AG04449 (cell line): ENCODE measurements at regions of chr6 and their contacts with region 1.

Region 1: DNA sequence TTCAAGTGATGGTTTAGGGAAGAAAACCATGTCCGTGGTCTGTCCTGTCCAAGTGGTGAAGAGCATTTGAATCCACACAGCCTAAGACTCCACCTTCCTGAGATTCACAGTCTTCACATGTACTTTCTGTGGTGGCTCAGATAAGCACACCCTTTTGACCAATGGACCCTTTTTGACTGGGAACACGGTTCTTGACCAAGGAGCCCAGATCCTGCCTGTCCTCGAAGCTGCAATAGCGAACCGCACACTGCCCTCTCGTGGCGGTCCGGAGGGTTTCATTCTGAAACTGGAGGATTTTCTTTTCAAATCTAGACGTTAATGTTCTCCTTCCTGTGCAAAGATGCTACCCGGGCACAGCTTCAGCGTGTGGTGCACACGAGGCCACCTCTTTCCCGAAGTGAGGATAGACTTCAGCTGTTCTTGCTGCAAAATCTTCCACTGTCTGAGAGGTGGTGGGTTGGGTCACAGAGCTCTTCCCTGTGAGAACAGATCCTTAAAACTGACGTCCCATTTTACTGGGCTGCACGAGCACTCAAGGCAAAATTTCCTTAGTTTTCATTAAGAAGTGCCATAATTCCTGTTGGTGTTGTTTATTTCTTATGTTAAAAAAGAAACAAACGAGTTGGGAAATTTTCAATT is 90.5 kb downstream of the SYNJ2 start:
- DNase-seq: no peak
- H3K4me3 ChIP-seq: no peak overlapping the region
- CTCF ChIP-seq: peak; percentile 75

Region 2: GRCh38 chr6:157688960-157689599 is 383.1 kb before region 1 on chr6:
- CTCF ChIA-PET with region 1: no interaction called
- POLR2A ChIA-PET with region 1: no interaction called
- DNase-seq: no peak
- H3K4me3 ChIP-seq: no peak overlapping the region
- CTCF ChIP-seq: peak; percentile 6

Region 3: DNA sequence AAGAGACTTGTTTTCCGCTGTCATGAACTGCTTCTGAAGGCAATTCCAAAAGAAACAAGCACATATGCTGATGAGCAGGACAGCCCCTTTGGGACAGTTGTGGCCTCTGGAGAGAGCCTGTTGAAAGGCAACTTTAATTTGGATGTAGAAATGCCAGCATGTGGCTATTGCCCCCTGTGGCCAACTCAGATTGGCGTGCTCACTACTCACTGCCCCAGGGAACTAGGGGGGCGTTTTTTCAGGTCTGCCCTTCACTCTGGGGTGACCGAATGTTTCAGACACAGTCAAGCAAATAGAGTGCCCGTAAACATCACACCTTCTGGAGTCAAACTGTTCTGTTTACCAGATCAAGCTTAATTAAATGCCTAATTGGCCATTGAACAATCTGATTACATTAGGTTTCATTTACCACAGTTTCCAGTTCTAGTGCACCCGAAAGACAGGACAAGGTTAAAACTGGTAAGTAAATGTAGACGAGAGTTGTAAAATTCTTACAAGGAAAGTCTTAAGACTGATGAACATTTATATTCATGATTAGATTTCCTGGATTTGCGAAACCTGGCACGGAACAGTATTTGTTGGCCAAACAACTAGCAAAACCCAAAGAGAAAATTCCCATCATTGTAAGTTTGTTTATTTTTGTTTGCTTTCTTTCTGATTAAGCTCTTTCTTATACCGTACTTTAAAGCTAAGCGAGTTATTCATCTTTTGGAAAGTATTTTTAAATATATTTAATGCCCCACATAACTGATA is 166.4 kb before region 1 on chr6:
- CTCF ChIA-PET with region 1: interaction called, 10 read pairs
- POLR2A ChIA-PET with region 1: no interaction called
- DNase-seq: no peak
- H3K4me3 ChIP-seq: no peak overlapping the region
- CTCF ChIP-seq: no peak

Region 4: DNA sequence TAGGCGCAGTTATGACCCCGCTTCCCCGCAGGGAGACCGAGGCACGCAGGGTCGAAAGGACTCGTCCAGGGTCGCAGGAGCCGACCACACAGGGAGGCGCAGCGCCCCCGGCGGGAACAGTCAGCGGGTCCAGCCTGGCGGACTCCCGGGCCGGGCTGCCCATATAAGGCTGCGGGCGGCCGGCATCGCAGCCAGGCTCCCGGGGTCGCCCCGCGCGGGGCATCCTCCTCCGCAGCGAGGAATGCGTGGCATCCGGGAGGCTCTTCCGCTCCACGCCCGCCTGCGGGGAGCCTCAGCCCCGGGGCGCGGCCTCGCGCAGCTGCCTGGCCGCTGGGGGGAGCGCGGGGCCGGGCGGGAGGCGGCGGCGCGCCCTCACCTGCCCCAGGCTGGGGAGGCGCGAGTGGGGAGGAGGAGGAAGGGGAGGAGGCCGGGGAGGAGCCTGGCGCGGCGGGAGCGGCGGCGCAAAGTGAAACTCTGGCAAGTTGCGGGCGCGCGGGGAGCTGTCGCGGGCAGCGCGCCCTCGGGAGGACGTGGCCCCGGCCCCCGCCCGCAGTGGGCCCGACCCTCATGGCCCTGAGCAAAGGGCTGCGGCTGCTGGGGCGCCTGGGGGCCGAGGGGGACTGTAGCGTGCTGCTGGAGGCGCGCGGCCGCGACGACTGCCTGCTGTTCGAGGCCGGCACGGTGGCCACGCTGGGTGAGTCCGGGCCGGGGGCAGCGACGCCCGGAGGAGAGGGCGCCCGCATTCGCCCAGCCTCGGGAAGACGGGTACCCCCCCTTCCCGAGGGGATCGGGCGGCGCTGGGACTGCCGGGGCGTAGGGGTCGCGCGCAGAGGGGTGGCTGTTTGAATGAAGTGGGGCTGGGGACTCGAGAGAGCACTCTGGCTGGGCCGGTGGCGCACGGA is 90.6 kb before region 1 on chr6 and contains the start of gene SYNJ2:
- CTCF ChIA-PET with region 1: interaction called, 90 read pairs
- POLR2A ChIA-PET with region 1: interaction called, 7 read pairs
- DNase-seq: no peak
- H3K4me3 ChIP-seq: peak within 1 kb of the TSS; percentile 77
- CTCF ChIP-seq: peak; percentile 68

Region 5: GRCh38 chr6:158033751-158034702 is 38.2 kb before region 1 on chr6:
- CTCF ChIA-PET with region 1: interaction called, 11 read pairs
- POLR2A ChIA-PET with region 1: interaction called, 4 read pairs
- DNase-seq: no peak
- H3K4me3 ChIP-seq: no peak overlapping the region
- CTCF ChIP-seq: no peak

Region 6: DNA sequence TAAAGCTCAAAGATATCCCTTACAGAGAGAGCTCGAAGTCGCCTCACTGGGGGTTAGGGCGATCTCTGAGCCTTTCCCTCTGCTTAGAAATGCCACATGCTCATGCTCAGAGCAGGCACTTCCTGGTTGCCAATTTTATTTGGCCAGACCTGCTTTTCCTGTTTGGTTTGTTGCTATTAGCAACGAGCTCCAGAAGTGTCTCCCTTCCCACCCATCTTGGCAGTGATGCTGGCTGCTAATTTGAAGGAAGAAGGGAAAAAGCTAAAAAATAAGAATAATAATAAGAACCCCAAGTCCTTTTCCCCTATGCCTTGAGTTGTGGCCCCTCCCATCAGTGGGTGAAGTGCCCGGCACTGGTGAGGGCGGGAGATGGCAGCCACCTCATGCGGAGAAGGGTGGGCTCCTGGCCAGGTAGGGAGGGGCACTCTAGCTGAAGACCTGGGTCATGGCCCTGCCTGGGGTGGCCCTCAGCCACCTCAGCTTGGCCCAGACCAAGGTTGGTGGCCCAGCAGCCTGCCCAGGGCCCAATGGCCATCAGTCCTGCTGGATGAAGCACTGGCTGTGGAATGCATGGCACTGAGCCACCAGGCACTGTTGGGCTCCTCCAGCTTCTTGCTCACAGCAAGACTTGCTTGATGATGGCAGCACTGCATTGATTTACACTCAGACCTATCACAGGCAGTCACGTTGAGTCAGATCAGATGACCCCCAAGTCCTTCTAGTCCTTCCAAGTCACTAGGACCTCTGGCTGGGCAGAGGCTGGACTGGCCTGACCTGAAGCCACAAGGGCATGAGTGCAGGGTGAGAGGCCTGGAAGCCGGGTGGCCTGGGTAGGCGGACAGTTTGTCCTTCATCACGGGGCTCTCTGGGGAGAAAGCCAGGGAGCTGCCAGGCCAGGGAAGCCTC is 11.5 kb before region 1 on chr6:
- CTCF ChIA-PET with region 1: interaction called, 118 read pairs
- POLR2A ChIA-PET with region 1: interaction called, 8 read pairs
- DNase-seq: peak; percentile 81
- H3K4me3 ChIP-seq: no peak overlapping the region
- CTCF ChIP-seq: no peak